Activated naive CD4-positive, alpha-beta T cell treated with anti-CD3 and anti-CD28 coated beads for 36 hours (primary cell): ENCODE measurements at regions of chrX and their contacts with region 1.

Region 1: DNA sequence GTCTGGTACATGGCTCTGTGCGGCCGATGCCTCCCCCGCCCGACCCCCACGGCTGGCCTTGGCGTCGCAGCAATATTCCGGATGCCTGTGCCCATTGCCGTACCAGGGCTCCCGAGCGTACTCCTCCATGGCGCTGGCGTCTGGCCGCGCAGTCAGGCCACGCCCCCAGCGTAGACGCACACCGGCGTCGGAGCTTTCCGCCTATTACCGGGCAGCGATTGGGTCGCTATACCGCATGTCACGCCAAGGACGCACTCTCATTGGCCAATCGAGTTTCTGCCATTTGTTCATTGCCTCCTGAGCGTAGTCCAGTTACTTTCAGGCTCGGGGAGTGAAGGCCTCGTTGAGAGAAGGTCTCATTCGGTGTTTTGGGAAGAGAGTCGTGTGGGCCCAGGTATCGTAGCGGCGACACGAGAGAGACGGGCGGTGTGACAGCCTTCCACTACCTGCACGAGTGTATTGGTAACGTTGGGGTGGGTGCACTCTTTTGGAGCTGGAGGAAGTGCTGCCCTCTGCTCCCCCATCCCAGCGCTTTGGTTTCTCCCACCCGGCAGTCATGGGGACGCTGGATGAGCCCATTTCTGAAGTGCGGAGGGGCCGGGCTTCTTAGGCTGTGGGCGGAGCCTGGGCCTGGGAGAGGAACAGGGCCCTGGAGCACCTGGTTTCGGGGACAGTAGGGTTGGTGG is at the starts of genes PQBP1 and TIMM17B:
- DNase-seq: peak; percentile 91
- H3K4me3 Mint-ChIP-seq: peak within 1 kb of the TSS; percentile 81
- H3K27ac Mint-ChIP-seq: peak within 1 kb of the TSS; percentile 94
- H3K4me1 Mint-ChIP-seq: peaks cover 22% of the 10 kb centered on the region
- H3K27me3 Mint-ChIP-seq: no peaks in the 10 kb centered on the region
- total RNA-seq, gene PQBP1: 86.8 to 94.5 TPM
- total RNA-seq, gene TIMM17B: 88.0 to 94.9 TPM

Region 2: GRCh38 chrX:48696301-48697181 is 201.2 kb before region 1 on chrX and contains the start of gene SUV39H1:
- CTCF ChIA-PET with region 1: no interaction called
- intact Hi-C with region 1: loop called (anchors 5 kb)
- DNase-seq: peak; percentile 87
- H3K4me3 Mint-ChIP-seq: peak within 1 kb of the TSS; percentile 89
- H3K27ac Mint-ChIP-seq: peak within 1 kb of the TSS; percentile 91
- H3K4me1 Mint-ChIP-seq: peaks cover 36% of the 10 kb centered on the region
- H3K27me3 Mint-ChIP-seq: no peaks in the 10 kb centered on the region
- total RNA-seq, gene SUV39H1: 31.5 to 31.9 TPM

Region 3: DNA sequence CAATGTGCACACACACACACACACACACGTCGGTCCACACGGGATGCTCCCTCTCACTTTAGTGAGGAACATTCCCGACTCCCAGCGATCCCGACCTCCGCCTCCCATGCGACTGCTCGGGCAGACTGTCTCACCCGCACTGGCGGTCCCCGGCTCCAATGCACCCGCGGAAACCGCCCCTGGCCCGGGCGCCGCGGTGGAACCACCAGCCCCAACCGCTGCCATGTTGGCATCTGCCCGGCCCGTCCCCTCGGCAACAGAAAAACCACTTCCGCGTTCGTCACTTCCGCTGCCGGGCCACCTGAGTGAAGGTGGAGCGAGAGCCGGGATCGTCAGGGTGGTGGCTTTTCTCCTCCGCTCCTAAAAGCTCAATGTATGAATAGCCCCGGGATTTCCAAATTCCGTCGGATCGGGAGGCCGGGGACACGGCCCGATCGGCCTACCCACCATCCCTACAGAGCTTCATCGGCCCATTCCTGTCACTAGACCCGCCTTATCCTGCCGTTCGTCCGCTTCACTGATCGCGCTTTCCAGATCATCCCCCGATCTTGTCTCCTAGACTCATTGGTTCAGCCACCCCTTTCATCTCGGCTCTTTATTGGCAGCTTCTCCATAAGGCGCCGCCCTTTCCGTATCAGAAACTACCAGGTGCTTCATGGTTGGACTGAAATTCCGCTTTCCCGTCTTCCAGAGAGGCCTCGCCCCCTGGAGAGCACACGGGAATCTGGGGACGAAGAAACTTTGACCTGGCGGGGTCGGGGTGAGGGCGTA is 13.8 kb after region 1 on chrX and contains the start of gene SLC35A2:
- CTCF ChIA-PET with region 1: interaction called, 3 read pairs
- intact Hi-C with region 1: loop called (anchors 1 kb)
- DNase-seq: peak; percentile 92
- H3K4me3 Mint-ChIP-seq: peak within 1 kb of the TSS; percentile 95
- H3K27ac Mint-ChIP-seq: peak within 1 kb of the TSS; percentile 99
- H3K4me1 Mint-ChIP-seq: peaks cover 34% of the 10 kb centered on the region
- H3K27me3 Mint-ChIP-seq: peaks cover 9% of the 10 kb centered on the region
- total RNA-seq, gene SLC35A2: 23.9 to 26.7 TPM

Region 4: DNA sequence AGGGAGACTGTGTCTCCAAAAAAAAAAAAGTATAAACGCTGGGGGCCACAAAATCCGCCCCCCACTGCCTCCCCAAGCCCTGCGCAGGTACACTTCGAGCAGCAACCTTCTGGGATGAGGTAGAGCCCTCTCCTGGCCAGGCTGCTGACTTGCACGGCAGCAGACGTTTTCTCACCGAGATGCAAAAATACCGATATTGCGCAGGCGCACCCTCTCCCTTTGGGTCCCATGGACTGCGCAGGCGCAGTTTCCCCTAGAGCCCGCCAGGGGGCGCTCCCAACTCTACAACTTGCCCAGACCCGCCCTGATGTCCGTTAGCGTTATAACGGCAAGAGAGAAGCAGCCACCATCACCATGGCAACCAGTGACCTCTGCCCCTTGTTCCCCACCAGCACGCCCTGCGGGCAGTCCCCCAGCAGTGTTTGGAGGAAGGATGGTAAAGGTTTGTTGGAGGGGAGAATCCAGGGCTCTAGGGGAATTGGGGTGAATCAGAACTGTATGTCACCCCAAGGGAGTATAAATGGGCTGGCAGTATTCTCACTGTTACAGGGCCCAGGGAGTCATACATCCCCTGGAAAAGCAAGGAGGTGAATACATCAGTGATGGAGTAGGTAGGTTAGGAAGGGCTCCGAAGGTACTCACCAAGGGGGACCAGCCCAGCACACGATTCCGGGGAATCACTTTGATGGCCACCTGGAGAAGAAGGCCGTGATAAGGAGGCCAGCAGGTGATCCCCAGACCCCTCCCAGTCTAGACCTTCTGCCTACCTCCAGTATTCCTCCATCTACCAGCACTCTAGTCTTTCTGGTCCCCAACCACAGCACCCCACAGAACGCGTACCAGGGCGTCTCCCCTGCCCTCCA is 19.6 kb after region 1 on chrX:
- CTCF ChIA-PET with region 1: interaction called, 3 read pairs
- intact Hi-C with region 1: loop called (anchors 1 kb)
- DNase-seq: peak; percentile 92
- H3K4me3 Mint-ChIP-seq: peak overlapping the region; percentile 95
- H3K27ac Mint-ChIP-seq: peak overlapping the region; percentile 99
- H3K4me1 Mint-ChIP-seq: peaks cover 39% of the 10 kb centered on the region
- H3K27me3 Mint-ChIP-seq: peaks cover 2% of the 10 kb centered on the region

Region 5: GRCh38 chrX:48937054-48937907 is 39.5 kb after region 1 on chrX:
- CTCF ChIA-PET with region 1: interaction called, 4 read pairs
- intact Hi-C with region 1: loop called (anchors 1 kb)
- DNase-seq: peak; percentile 95
- H3K4me3 Mint-ChIP-seq: peak overlapping the region; percentile 75
- H3K27ac Mint-ChIP-seq: peak overlapping the region; percentile 100
- H3K4me1 Mint-ChIP-seq: peaks cover 81% of the 10 kb centered on the region
- H3K27me3 Mint-ChIP-seq: no peaks in the 10 kb centered on the region

Region 6: DNA sequence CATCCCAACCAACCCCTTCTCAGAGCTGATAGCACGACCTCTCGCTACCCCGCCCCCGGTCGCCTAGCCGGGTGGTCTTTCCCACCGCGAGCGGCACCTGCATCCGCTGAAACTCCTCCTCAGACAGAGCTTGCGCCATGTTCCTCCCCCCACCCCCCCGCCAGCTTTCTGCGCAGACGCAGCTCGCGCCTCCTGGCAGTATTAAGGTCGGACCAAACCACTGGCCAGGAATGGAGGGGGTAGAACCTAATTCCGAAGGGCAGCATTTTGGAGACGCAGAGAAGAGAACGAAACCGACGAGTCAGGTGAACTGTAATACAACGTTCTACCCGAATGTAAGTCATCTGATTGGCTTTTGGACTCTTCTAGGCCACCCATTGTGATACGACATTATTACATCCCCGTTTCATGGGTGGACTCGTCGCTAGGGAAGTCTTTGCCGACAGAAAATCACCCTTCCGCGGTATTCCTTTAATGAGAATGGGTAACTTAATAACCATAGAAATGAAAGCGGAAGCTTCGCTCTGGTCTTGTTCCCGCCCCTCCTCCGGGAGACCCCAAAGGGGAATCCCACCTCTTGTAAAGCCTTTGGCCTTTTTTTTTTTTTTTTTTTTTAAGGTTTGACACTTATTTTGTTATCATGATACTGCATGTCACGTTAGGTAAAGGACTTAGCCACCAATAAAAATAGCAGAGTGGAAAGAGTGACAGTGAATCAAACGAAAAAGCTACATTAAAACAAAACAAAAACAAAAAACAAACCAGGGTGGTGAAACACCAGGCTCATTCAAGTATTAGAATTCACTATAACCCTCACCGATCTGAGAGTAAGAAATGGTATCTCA is 104.5 kb after region 1 on chrX and contains the start of gene GRIPAP1:
- CTCF ChIA-PET with region 1: no interaction called
- intact Hi-C with region 1: loop called (anchors 5 kb)
- DNase-seq: peak; percentile 85
- H3K4me3 Mint-ChIP-seq: peak within 1 kb of the TSS; percentile 99
- H3K27ac Mint-ChIP-seq: peak within 1 kb of the TSS; percentile 97
- H3K4me1 Mint-ChIP-seq: peaks cover 37% of the 10 kb centered on the region
- H3K27me3 Mint-ChIP-seq: no peaks in the 10 kb centered on the region
- total RNA-seq, gene GRIPAP1: 64.8 to 73.1 TPM

Region 7: GRCh38 chrX:49163555-49164419 is 266.0 kb after region 1 on chrX:
- CTCF ChIA-PET with region 1: no interaction called
- intact Hi-C with region 1: loop called (anchors 2 kb)
- DNase-seq: peak; percentile 77
- H3K4me3 Mint-ChIP-seq: peak overlapping the region; percentile 76
- H3K27ac Mint-ChIP-seq: peak overlapping the region; percentile 93
- H3K4me1 Mint-ChIP-seq: peaks cover 27% of the 10 kb centered on the region
- H3K27me3 Mint-ChIP-seq: no peaks in the 10 kb centered on the region